ENCODE measurements at regions of chr14 and their contacts with region 1.

Region 1: DNA sequence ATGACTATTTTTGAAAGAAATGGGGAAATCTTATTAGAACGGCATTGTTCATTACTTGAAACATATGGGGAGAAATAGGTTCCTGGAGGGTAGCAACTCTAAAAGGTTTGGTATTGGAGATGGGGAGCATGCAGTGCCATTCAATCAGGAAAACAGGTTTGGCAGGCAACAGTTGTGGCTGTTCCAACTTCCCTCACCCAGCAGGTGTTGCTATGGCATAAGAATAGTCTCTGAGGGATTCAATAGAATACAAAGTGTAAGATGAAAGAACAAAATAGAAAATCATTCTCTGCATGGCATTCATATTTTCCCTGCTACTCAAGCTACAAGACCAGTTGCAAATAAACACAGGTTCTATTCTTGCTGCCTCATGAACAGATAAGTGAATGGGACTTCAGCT is 393.3 kb upstream of the RPL10L start:
- DNase-seq: no peak
- H3K4me3 ChIP-seq: no peak overlapping the region
- H3K27ac ChIP-seq: no peak overlapping the region
- H3K4me1 ChIP-seq: no peaks in the 10 kb centered on the region
- H3K27me3 ChIP-seq: no peaks in the 10 kb centered on the region
- CTCF ChIP-seq: no peak
- POLR2A ChIP-seq: no peak

Region 2: DNA sequence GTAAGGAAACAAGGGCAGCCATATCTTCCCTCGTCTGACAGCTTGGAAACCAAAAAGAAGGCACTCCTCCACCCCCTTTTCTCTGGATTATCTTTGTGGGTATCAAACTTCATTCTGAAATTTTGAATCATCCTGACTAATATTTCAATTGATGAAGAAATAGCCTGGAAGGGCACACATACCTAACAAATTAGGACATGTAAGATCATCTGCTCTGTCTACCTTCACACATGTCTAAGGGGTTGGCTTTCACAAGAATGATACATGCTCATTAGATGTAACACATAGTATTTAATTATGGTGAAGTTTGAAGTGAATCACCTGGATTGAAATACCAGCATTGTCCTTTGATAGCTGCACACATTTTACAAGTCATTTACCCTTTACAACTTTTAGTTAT is 45.2 kb before region 1 on chr14:
- intact Hi-C with region 1: loop called (anchors 2 kb)
- DNase-seq: no peak
- H3K4me3 ChIP-seq: no peak overlapping the region
- H3K27ac ChIP-seq: no peak overlapping the region
- H3K4me1 ChIP-seq: no peaks in the 10 kb centered on the region
- H3K27me3 ChIP-seq: no peaks in the 10 kb centered on the region
- CTCF ChIP-seq: no peak
- POLR2A ChIP-seq: no peak

Region 3: DNA sequence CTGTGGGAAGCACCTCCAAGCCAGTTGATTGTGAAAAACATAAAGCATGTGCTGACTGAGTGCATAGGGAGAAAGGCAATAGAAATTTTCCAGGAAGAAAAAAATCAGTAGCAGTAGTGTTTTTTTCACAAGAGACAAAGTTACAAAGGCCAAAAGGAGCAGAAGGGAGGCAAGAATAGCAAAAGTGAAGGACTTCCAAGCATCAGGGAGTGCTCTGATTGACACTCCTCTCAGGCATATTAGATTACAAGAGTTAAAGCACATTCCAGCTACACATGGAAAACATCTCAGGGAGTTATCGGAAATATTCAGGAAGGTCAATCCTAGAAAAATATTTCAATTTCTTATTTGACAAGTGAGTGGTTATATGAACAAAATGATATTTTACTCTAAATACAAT is 122.6 kb after region 1 on chr14:
- intact Hi-C with region 1: no loop called
- DNase-seq: no peak
- H3K4me3 ChIP-seq: no peak overlapping the region
- H3K27ac ChIP-seq: no peak overlapping the region
- H3K4me1 ChIP-seq: no peaks in the 10 kb centered on the region
- H3K27me3 ChIP-seq: no peaks in the 10 kb centered on the region
- CTCF ChIP-seq: no peak
- POLR2A ChIP-seq: no peak

Measured in breast epithelium (tissue), 4 donors.